GM13977 (cell line): ENCODE measurements at regions of chr3 and their contacts with region 1.

Region 1: DNA sequence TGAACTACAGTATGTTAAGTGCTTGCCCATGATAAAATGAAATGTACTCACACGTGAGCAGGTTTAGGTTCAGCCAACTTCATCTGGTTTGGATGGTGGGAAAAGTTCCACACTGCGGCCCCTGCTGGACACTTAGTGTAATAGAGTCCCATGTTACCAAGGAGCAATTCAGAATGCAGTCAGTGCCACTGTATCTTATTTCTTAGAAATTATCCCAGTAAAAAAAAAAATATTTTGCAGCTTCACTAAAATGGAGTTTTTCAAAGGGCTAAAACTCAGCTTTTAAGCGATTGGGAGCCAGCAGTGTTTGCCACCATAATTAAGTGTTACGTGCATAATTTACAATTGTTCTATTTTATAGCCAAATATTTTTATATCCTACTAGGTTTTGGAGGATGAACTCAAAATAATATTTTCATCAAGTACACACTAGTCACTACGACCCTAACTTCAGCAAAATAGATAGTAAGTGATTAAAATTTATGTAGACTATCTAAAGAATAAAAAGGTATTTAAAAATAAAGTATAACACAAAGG is 371.7 kb upstream of the GBE1 start:
- DNase-seq: peak; percentile 35
- CTCF ChIP-seq: peak; percentile 73

Region 2: GRCh38 chr3:81490541-81491288 is 642.4 kb before region 1 on chr3:
- in situ Hi-C with region 1: loop called (anchors 10 kb)
- DNase-seq: peak; percentile 56
- CTCF ChIP-seq: peak; percentile 76